Naive thymus-derived CD8-positive, alpha-beta T cell (primary cell): ENCODE measurements at regions of chr9 and their contacts with region 1.

Region 1: GRCh38 chr9:95875305-95876137 is at the start of gene ERCC6L2:
- DNase-seq: peak; percentile 82 to 96 (median 92)
- ATAC-seq: peak; percentile 74 to 76
- H3K4me3 Mint-ChIP-seq: no peak within 1 kb of the TSS
- H3K27ac Mint-ChIP-seq: no peak within 1 kb of the TSS
- H3K4me1 Mint-ChIP-seq: peaks cover 13 to 37% (median 27%) of the 10 kb centered on the region in 4 donors
- H3K27me3 Mint-ChIP-seq: no peaks in the 10 kb centered on the region
- polyA plus RNA-seq, gene ERCC6L2: 45.7 to 89.4 (median 62.8) TPM

Region 2: DNA sequence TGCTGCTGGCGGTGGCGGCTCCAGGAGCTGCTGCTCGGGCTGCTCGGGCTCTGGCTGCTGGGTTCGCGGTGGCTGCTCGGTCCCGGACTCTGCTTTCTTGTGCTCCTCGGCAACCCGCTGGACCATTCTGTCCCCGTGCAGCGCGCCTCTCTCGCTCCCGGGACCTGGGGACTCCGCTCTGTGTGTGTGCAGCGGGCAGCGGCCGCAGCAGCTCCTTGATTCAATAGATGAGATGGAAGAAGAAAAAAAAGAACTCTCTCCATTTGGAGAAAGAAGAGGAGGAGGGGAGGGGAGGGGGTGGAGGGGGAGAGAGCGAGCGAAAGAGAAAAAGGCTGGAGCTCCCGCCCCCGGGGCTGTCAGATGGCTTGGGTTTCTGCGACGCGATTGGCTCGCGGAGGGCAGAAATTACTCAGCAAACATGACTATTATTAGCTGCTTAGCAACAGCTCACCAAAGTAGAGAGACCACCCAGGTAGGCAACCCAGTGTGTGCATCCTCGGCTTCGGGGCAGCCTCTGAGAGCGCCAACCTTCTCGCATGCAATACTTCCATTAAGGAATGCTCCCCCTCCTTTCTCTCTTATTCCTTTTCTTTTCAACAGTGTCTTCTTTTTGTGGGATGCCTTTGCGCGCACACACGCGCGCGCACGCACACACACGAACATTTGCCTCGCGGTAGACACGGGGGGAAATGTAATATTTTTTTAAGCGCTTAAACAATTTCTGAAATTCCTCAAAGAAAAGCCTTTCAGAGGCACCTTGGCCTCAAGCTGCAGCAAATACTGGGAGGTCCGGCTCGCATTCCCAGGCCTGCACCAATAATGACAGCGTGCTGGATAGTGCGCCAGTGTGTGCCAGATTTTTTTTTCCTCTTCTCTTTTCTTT is 366.3 kb before region 1 on chr9:
- POLR2A ChIA-PET with region 1: interaction called, 15 read pairs
- DNase-seq: peak in 9 of 10 donors; percentile 44 to 80 (median 68)
- ATAC-seq: peak; percentile 28 to 52
- H3K4me3 Mint-ChIP-seq: peak overlapping the region; percentile 85 to 100 (median 94)
- H3K27ac Mint-ChIP-seq: peak overlapping the region; percentile 74 to 94 (median 84)
- H3K4me1 Mint-ChIP-seq: peaks cover 29 to 65% (median 46%) of the 10 kb centered on the region in 4 donors
- H3K27me3 Mint-ChIP-seq: peaks cover 0 to 25% (median 0%) of the 10 kb centered on the region in 5 donors

Region 3: GRCh38 chr9:95724253-95724991 is 151.1 kb before region 1 on chr9:
- POLR2A ChIA-PET with region 1: no interaction called
- DNase-seq: peak; percentile 30 to 94 (median 79)
- ATAC-seq: peak; percentile 89 to 91
- H3K4me3 Mint-ChIP-seq: peak overlapping the region; percentile 24 to 67 (median 54)
- H3K27ac Mint-ChIP-seq: peak overlapping the region; percentile 51 to 94 (median 76)
- H3K4me1 Mint-ChIP-seq: peaks cover 25 to 57% (median 48%) of the 10 kb centered on the region in 4 donors
- H3K27me3 Mint-ChIP-seq: peaks cover 0 to 3% (median 0%) of the 10 kb centered on the region in 5 donors

Region 4: DNA sequence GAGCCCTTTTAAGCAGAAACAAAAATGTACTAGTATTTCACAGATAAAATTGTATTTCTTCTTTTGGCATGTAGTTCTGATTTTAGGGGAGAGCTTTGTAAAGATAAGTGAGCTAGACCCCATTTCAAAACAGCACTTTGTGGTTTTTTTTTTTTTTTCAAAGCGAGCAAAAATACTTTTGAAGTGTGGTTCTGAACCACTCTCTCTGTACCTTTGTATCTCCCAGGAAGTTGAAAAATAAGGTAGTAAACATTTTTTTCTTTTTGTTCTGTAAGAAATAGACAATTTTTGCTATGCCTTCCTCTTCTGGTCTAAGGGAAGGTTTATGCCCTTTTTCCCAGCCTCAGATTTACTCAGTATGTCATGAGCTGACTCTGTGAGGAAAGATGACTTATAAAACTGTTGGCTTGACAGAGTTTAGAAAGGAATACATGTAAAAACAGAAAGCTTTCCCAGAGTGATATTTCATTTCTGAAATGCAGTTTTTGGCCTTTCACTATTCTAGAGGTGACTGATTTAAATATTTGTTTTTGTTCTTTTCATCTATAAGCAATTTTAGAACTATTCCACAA is 12.5 kb after region 1 on chr9:
- POLR2A ChIA-PET with region 1: interaction called, 120 read pairs
- DNase-seq: peak in 3 of 10 donors; percentile 61 to 75 (median 72)
- ATAC-seq: peak; percentile 86 to 91
- H3K4me3 Mint-ChIP-seq: peak overlapping the region; percentile 52 to 82 (median 74)
- H3K27ac Mint-ChIP-seq: peak overlapping the region; percentile 75 to 95 (median 90)
- H3K4me1 Mint-ChIP-seq: peaks cover 27 to 74% (median 72%) of the 10 kb centered on the region in 4 donors
- H3K27me3 Mint-ChIP-seq: no peaks in the 10 kb centered on the region

Region 5: GRCh38 chr9:95896580-95896979 is 21.1 kb after region 1 on chr9:
- POLR2A ChIA-PET with region 1: interaction called, 120 read pairs
- DNase-seq: no peak
- ATAC-seq: no peak
- H3K4me3 Mint-ChIP-seq: peak overlapping the region in 8 of 10 donors; percentile 30 to 62 (median 54)
- H3K27ac Mint-ChIP-seq: peak overlapping the region; percentile 69 to 94 (median 86)
- H3K4me1 Mint-ChIP-seq: peaks cover 7 to 61% (median 51%) of the 10 kb centered on the region in 4 donors
- H3K27me3 Mint-ChIP-seq: no peaks in the 10 kb centered on the region

Region 6: GRCh38 chr9:96020792-96021550 is 145.4 kb after region 1 on chr9:
- POLR2A ChIA-PET with region 1: interaction called, 12 read pairs
- DNase-seq: peak; percentile 21 to 73 (median 44)
- ATAC-seq: peak; percentile 54 to 58
- H3K4me3 Mint-ChIP-seq: peak overlapping the region; percentile 81 to 96 (median 88)
- H3K27ac Mint-ChIP-seq: peak overlapping the region; percentile 81 to 96 (median 92)
- H3K4me1 Mint-ChIP-seq: peaks cover 48 to 82% (median 77%) of the 10 kb centered on the region in 4 donors
- H3K27me3 Mint-ChIP-seq: peaks cover 0 to 13% (median 0%) of the 10 kb centered on the region in 5 donors